ENCODE measurements at regions of chr10 and their contacts with region 1.

Region 1: DNA sequence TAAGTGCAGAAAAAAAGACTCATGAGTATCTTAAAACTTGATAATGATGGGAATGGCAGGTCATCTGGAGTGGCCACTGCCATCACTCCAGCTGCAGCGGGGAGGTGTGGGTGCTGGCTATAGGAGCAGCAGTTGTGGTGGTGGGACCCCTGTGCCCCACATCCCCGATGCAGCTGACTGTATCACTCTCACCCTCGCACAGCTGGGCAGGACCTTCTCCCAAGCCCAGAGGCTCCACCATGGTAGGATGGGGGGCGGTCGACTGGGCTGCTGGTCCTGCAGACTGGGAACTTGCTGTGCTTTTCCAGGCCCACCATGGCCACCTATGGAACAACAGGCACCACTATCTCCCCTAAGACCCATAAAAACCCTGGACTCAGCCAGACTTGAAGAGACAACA is 844.4 kb downstream of the SORCS1 start:
- DNase-seq: no peak
- ATAC-seq: no peak
- H3K4me3 ChIP-seq: no peak overlapping the region
- H3K27ac ChIP-seq: no peak overlapping the region
- H3K4me1 ChIP-seq: no peaks in the 10 kb centered on the region
- H3K27me3 ChIP-seq: no peaks in the 10 kb centered on the region

Region 2: DNA sequence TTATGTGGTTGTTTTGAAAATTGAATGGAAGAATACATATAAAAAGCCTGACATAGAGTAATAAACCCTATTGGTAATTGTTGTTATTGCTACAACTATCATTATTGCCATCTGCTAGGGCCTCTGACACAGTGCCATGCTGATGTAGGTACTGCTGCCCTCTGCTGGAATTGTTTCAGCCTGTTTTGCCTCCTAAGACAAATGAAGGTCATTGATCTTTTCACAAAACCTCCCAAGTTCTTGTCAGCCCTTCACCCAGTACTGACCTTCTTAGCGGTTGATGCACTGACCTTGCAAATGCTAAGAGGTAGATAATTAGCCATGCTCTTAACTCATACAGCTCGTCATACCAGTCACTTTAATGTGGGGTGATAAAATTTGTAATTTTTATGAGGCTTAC is 130.8 kb before region 1 on chr10:
- intact Hi-C with region 1: no loop called
- DNase-seq: no peak
- ATAC-seq: no peak
- H3K4me3 ChIP-seq: no peak overlapping the region
- H3K27ac ChIP-seq: no peak overlapping the region
- H3K4me1 ChIP-seq: no peaks in the 10 kb centered on the region
- H3K27me3 ChIP-seq: no peaks in the 10 kb centered on the region

Region 3: DNA sequence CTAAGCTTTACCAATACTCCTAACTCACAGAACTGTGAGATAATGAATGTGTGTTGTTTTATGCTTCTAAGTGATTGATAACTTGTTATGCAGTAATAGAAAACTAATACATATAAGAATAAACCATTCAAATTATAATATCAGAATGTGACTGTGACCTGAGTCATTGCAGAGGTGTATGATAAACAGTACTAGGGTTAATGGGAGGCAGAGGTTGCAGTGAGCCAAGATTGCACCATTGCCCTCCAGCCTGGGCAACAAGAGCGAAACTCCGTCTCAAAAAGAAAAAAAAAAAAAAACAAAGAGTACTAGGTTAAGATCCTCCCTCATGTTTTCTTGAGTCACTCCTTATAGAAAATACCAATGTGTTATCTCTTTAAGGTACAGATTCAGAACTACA is 105.8 kb before region 1 on chr10:
- intact Hi-C with region 1: no loop called
- DNase-seq: no peak
- ATAC-seq: no peak
- H3K4me3 ChIP-seq: no peak overlapping the region
- H3K27ac ChIP-seq: no peak overlapping the region
- H3K4me1 ChIP-seq: no peaks in the 10 kb centered on the region
- H3K27me3 ChIP-seq: no peaks in the 10 kb centered on the region

Region 4: DNA sequence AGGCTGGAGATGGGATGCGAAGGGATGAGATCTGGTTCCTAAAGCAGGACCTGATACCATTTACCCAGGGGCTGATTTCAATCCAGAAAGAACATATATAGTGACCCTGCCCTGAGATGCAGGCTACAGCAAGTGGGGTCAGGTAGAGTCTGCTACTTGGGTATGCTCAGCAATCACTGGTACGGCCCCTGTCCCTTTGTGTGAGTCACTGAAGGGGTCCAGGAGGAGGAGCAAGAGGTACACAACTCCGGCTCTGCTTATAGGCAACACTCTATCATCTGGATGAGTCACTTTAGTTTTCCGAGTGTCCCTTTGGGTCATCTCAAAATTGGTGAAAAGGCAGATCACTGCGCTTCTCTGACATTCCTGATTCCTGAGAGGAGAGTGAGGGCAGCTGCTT is 924.0 kb after region 1 on chr10:
- intact Hi-C with region 1: loop called in 1 of 2 experiments (anchors 10 kb)
- DNase-seq: no peak
- ATAC-seq: no peak
- H3K4me3 ChIP-seq: no peak overlapping the region
- H3K27ac ChIP-seq: no peak overlapping the region
- H3K4me1 ChIP-seq: no peaks in the 10 kb centered on the region
- H3K27me3 ChIP-seq: no peaks in the 10 kb centered on the region

Measured in aorta (tissue), 5 donors.